Activated T-helper 2 cell treated with anti-CD3 and anti-CD28 coated beads, Interferon-gamma antibody, Interleukin-2, Interleukin-4, amounts not matched to agents 10 μg/mL and 5 μg/mL and 100 μg/mL, durations not matched to agents 14 hours and 24 hours and 36 hours (primary cell): ENCODE measurements at regions of chr2 and their contacts with region 1.

Region 1: GRCh38 chr2:222561817-222562645 is 93.9 kb downstream of the FARSB start:
- DNase-seq: no peak
- H3K4me3 Mint-ChIP-seq: no peak overlapping the region
- H3K27ac Mint-ChIP-seq: no peak overlapping the region
- H3K4me1 Mint-ChIP-seq: no peaks in the 10 kb centered on the region
- H3K27me3 Mint-ChIP-seq: no peaks in the 10 kb centered on the region

Region 2: GRCh38 chr2:222057347-222058073 is 504.5 kb before region 1 on chr2:
- intact Hi-C with region 1: loop called (anchors 5 kb)
- DNase-seq: no peak
- H3K4me3 Mint-ChIP-seq: no peak overlapping the region
- H3K27ac Mint-ChIP-seq: no peak overlapping the region
- H3K4me1 Mint-ChIP-seq: no peaks in the 10 kb centered on the region
- H3K27me3 Mint-ChIP-seq: peaks cover 14% of the 10 kb centered on the region